HepG2 (cell line): ENCODE measurements at regions of chr14 and their contacts with region 1.

Region 1: DNA sequence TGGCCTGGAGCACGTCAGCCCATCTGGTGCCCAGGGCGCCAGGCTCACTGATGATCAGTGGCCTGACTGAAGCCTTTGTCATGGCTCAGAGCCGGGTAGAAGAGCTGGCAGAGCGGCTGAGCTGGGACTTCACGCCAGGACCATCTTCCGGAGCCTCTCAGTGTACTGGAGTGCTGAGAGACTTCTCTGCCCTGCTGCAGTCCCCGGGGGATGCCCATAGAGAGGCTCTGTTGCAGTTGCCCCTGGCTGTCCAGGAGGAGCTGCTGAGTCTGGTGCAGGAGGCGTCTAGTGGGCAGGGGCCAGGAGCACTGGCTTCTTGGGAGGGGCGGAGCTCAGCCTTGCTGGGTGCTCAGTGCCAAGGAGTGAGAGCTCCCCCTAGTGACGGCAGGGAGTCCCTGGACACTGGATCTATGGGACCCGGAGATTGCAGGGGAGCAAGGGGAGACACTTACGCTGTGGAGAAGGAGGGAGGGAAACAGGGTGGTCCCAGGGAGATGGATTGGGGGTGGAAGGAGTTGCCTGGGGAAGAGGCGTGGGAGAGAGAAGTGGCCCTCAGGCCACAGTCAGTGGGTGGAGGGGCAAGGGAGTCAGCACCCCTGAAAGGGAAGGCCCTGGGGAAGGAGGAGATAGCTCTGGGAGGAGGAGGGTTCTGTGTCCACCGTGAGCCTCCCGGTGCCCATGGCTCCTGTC is 2.0 kb downstream of the KHNYN start:
- DNase-seq: peak; percentile 97
- ATAC-seq: peak; percentile 66
- H3K4me3 ChIP-seq: peak overlapping the region in 2 of 3 experiments; percentile 80 to 82; a peak in 4 of 6 replicates
- H3K27ac ChIP-seq: no peak overlapping the region
- H3K4me1 ChIP-seq: peaks cover 52% of the 10 kb centered on the region
- H3K27me3 ChIP-seq: no peaks in the 10 kb centered on the region; a peak in 1 of 5 replicates
- CTCF ChIP-seq: peak; percentile 100
- EP300 ChIP-seq: 0 out of 4 replicates have a peak, but pooled peaks of 1 of the 2 experiments have one; percentile 45
- POLR2A ChIP-seq: peak in 1 of 2 experiments; percentile 21; a peak in 2 of 4 replicates
- RAD21 ChIP-seq: peak; percentile 100

Region 2: GRCh38 chr14:24310646-24311604 is 120.8 kb before region 1 on chr14 and contains the start of gene LTB4R:
- CTCF ChIA-PET with region 1: interaction called, 4 read pairs
- POLR2A ChIA-PET with region 1: interaction called, 35 read pairs
- in situ Hi-C with region 1: no loop called
- intact Hi-C with region 1: no loop called
- DNase-seq: no peak
- ATAC-seq: no peak
- H3K4me3 ChIP-seq: no peak within 1 kb of the TSS
- H3K27ac ChIP-seq: peak within 1 kb of the TSS; percentile 4
- H3K4me1 ChIP-seq: peaks cover 61% of the 10 kb centered on the region
- H3K27me3 ChIP-seq: no peaks in the 10 kb centered on the region; a peak in 1 of 5 replicates
- CTCF ChIP-seq: no peak
- EP300 ChIP-seq: no peak
- POLR2A ChIP-seq: no peak
- RAD21 ChIP-seq: no peak
- total RNA-seq, gene LTB4R: 1.00 and 3.2 TPM in 2 replicates

Region 3: DNA sequence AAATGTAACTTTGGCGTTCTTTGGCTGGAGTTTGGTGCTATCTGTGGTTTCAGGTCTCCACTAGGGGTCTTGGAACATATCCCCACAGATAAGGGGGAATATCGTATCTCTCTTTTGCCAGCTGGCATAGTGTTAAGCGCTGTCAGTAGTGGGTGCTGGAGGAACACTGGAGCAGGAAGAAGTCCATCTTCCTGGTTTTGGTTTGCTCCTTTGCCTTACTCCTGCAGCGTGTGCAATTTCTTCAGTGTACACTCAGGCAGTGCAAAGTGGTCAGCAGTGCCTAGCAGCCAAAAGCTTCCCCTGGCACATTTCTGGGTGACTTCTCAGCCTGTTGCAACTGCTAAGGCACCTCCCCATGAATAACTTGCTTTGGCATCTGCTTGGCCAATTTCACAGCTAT is 80.2 kb before region 1 on chr14:
- CTCF ChIA-PET with region 1: no interaction called
- POLR2A ChIA-PET with region 1: interaction called, 10 read pairs
- in situ Hi-C with region 1: no loop called
- intact Hi-C with region 1: no loop called
- DNase-seq: no peak
- ATAC-seq: peak; percentile 68
- H3K4me3 ChIP-seq: no peak overlapping the region
- H3K27ac ChIP-seq: no peak overlapping the region
- H3K4me1 ChIP-seq: peaks cover 10% of the 10 kb centered on the region
- H3K27me3 ChIP-seq: peaks cover 4 to 14% of the 10 kb centered on the region in 2 experiments; a peak in 2 of 5 replicates
- CTCF ChIP-seq: peak; percentile 25; the same call in 1 of the 2 replicates
- EP300 ChIP-seq: no peak
- POLR2A ChIP-seq: no peak
- RAD21 ChIP-seq: 0 out of 2 replicates have a peak, but pooled peaks have one; percentile 15

Region 4: GRCh38 chr14:24378981-24379906 is 52.5 kb before region 1 on chr14:
- CTCF ChIA-PET with region 1: no interaction called
- POLR2A ChIA-PET with region 1: interaction called, 10 read pairs
- in situ Hi-C with region 1: no loop called
- intact Hi-C with region 1: no loop called
- DNase-seq: no peak
- ATAC-seq: no peak; the same call in 2 of the 3 replicates
- H3K4me3 ChIP-seq: no peak overlapping the region
- H3K27ac ChIP-seq: no peak overlapping the region
- H3K4me1 ChIP-seq: peaks cover 14% of the 10 kb centered on the region
- H3K27me3 ChIP-seq: peaks cover 7 to 58% of the 10 kb centered on the region in 2 experiments; a peak in 4 of 5 replicates
- CTCF ChIP-seq: no peak
- EP300 ChIP-seq: no peak
- POLR2A ChIP-seq: no peak
- RAD21 ChIP-seq: no peak

Region 5: GRCh38 chr14:24418492-24418873 is 13.2 kb before region 1 on chr14:
- CTCF ChIA-PET with region 1: no interaction called
- POLR2A ChIA-PET with region 1: interaction called, 46 read pairs
- in situ Hi-C with region 1: no loop called
- intact Hi-C with region 1: no loop called
- DNase-seq: no peak
- ATAC-seq: no peak
- H3K4me3 ChIP-seq: no peak overlapping the region
- H3K27ac ChIP-seq: no peak overlapping the region
- H3K4me1 ChIP-seq: peaks cover 14% of the 10 kb centered on the region
- H3K27me3 ChIP-seq: peaks cover 0 to 7% of the 10 kb centered on the region in 2 experiments; a peak in 1 of 5 replicates
- CTCF ChIP-seq: no peak
- EP300 ChIP-seq: no peak
- POLR2A ChIP-seq: no peak
- RAD21 ChIP-seq: no peak

Region 6: DNA sequence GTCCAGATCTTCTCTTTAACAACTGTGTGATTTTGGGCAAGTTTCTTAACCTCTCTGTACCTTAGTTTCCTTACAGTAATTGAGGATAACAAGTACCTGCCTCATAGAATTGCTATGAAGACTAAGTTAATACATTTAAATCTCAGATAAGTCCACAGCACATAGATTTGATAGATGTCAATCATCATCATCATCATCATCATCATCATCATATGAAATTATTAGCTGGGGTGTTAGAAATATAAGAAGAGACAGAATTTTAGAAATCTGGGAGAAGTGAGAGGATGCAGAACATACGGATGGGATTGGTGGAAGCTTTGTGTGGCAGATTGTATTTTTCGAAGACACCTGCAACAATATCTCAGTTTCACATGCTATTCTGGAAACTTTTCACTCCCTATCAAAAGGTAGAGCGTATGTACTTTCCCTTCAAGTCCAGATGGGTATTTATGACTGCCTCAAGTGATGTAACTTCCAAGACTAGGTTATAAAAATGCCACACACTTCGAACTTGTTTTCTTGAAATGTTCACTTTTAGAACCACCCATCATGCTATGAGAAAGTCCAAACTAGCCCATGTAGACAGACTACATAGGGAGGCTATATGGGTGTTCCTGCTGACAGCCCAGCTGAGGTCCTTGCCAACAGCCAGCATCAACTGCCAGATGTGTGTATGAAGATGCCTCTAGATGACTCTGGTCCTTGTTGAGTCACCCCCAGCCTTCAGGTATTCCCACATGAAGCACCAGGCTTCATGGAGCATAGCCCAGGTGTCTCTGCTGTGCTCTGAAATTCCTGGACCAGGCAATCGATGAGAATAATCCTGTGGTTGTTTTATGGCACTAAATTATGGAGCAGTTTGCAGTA is 31.5 kb after region 1 on chr14:
- CTCF ChIA-PET with region 1: no interaction called
- POLR2A ChIA-PET with region 1: no interaction called
- in situ Hi-C with region 1: no loop called
- intact Hi-C with region 1: no loop called
- DNase-seq: no peak
- ATAC-seq: no peak
- H3K4me3 ChIP-seq: no peak overlapping the region
- H3K27ac ChIP-seq: no peak overlapping the region
- H3K4me1 ChIP-seq: no peaks in the 10 kb centered on the region
- H3K27me3 ChIP-seq: no peaks in the 10 kb centered on the region
- CTCF ChIP-seq: no peak
- EP300 ChIP-seq: no peak
- POLR2A ChIP-seq: no peak
- RAD21 ChIP-seq: no peak

Region 7: GRCh38 chr14:24513009-24513408 is 81.3 kb after region 1 on chr14:
- CTCF ChIA-PET with region 1: no interaction called
- POLR2A ChIA-PET with region 1: no interaction called
- in situ Hi-C with region 1: no loop called
- intact Hi-C with region 1: no loop called
- DNase-seq: no peak
- ATAC-seq: peak; percentile 41; the same call in 1 of the 3 replicates
- H3K4me3 ChIP-seq: no peak overlapping the region
- H3K27ac ChIP-seq: no peak overlapping the region
- H3K4me1 ChIP-seq: no peaks in the 10 kb centered on the region
- H3K27me3 ChIP-seq: no peaks in the 10 kb centered on the region
- CTCF ChIP-seq: no peak
- EP300 ChIP-seq: no peak
- POLR2A ChIP-seq: no peak
- RAD21 ChIP-seq: no peak

Region 8: DNA sequence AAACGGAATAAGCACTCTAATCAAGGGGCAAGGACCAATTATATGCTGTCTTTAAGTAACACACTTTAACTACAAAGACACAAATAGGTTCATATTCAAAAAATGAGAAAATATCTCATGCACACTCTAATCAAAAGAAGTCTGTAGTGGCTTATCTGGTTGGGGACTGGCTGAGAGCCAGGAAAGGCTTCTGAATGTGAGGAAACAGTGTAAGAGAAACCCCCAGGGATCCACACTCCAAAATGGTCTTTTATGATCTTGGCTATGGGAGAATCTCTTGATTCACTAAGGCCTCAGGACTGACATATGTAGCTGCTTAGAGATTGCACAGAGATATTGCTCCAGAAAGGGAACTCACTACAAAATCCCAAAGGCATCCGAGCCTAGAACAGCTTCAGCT is 134.1 kb after region 1 on chr14:
- CTCF ChIA-PET with region 1: no interaction called
- POLR2A ChIA-PET with region 1: no interaction called
- in situ Hi-C with region 1: no loop called
- intact Hi-C with region 1: no loop called
- DNase-seq: no peak
- ATAC-seq: no peak
- H3K4me3 ChIP-seq: no peak overlapping the region
- H3K27ac ChIP-seq: no peak overlapping the region
- H3K4me1 ChIP-seq: no peaks in the 10 kb centered on the region
- H3K27me3 ChIP-seq: no peaks in the 10 kb centered on the region
- CTCF ChIP-seq: no peak
- EP300 ChIP-seq: no peak
- POLR2A ChIP-seq: no peak
- RAD21 ChIP-seq: no peak